ENCODE measurements at regions of chr2 and their contacts with region 1.

Region 1: GRCh38 chr2:223101340-223102039 is 49.5 kb downstream of the KCNE4 start:
- DNase-seq: peak; percentile 60
- H3K4me3 ChIP-seq: no peak overlapping the region
- H3K27ac ChIP-seq: peak overlapping the region; percentile 53 to 75 (median 73)
- H3K4me1 ChIP-seq: peaks cover 3 to 48% (median 44%) of the 10 kb centered on the region in 4 donors
- H3K27me3 ChIP-seq: no peaks in the 10 kb centered on the region
- CTCF ChIP-seq: peak; percentile 45 to 63 (median 50)
- EP300 ChIP-seq: no peak
- POLR2A ChIP-seq: no peak

Region 2: DNA sequence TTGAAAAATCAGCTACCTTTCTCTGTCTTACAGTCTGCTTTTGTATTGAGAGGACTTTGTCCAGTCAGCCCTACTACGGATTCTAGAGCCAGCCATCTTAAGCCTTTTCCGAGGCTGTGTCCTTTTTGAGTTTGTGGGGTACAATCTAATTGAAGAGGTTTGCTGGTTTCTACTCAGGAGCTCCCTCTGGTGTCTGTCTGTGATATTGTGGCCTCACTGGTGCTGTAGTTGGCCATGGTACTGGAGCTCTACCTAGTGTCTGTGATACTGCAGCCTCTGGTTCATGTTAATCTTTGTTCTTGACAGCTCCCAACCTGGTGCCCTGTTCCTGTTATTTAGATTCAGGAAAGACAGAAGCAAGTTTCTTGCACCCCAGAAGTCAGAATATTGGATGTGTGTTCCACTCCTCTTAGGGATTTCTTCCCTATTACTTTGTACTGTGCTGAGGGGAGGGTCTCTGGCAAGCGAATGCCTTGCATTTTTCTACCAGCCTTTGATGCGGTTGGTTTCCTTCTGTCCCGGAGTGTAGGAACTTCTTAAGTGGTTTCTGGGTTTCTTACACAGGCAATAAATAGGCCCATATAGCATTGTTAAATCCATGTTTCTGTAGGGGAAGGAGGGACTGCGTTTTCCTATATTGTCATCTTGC is 162.2 kb before region 1 on chr2:
- intact Hi-C with region 1: no loop called
- DNase-seq: no peak
- H3K4me3 ChIP-seq: no peak overlapping the region
- H3K27ac ChIP-seq: no peak overlapping the region
- H3K4me1 ChIP-seq: peaks cover 4 to 13% (median 12%) of the 10 kb centered on the region in 4 donors
- H3K27me3 ChIP-seq: no peaks in the 10 kb centered on the region
- CTCF ChIP-seq: peak; percentile 45 to 59 (median 51)
- EP300 ChIP-seq: no peak
- POLR2A ChIP-seq: no peak

Region 3: GRCh38 chr2:222982010-222982908 is 119.2 kb before region 1 on chr2:
- intact Hi-C with region 1: loop called (anchors 5 kb)
- DNase-seq: peak; percentile 80
- H3K4me3 ChIP-seq: no peak overlapping the region
- H3K27ac ChIP-seq: no peak overlapping the region
- H3K4me1 ChIP-seq: peaks cover 0 to 27% (median 20%) of the 10 kb centered on the region in 4 donors
- H3K27me3 ChIP-seq: no peaks in the 10 kb centered on the region
- CTCF ChIP-seq: peak; percentile 52 to 68 (median 60)
- EP300 ChIP-seq: no peak
- POLR2A ChIP-seq: no peak

Region 4: GRCh38 chr2:223712642-223713041 is 611.2 kb after region 1 on chr2:
- intact Hi-C with region 1: no loop called
- DNase-seq: no peak
- H3K4me3 ChIP-seq: no peak overlapping the region
- H3K27ac ChIP-seq: no peak overlapping the region
- H3K4me1 ChIP-seq: no peaks in the 10 kb centered on the region
- H3K27me3 ChIP-seq: no peaks in the 10 kb centered on the region
- CTCF ChIP-seq: no peak
- EP300 ChIP-seq: no peak
- POLR2A ChIP-seq: no peak

Measured in esophagus muscularis mucosa (tissue), 4 donors.